Endothelial cell of umbilical vein (primary cell): ENCODE measurements at regions of chr12 and their contacts with region 1.

Region 1: DNA sequence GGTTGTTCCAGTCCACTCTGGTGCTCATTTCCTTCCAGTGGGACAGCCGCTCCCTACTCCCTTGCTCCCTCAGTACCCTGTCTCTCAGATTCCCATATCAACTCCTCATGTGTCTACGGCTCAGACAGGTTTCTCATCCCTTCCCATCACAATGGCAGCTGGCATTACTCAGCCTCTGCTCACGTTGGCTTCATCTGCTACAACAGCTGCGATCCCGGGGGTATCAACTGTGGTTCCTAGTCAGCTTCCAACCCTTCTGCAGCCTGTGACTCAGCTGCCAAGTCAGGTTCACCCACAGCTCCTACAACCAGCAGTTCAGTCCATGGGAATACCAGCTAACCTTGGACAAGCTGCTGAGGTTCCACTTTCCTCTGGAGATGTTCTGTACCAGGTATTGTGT is 69.9 kb downstream of the RAD52 start:
- DNase-seq: no peak
- H3K4me3 ChIP-seq: no peak overlapping the region
- H3K27ac ChIP-seq: no peak overlapping the region
- H3K4me1 ChIP-seq: no peaks in the 10 kb centered on the region
- H3K27me3 ChIP-seq: no peaks in the 10 kb centered on the region
- CTCF ChIP-seq: no peak
- POLR2A ChIP-seq: no peak

Region 2: DNA sequence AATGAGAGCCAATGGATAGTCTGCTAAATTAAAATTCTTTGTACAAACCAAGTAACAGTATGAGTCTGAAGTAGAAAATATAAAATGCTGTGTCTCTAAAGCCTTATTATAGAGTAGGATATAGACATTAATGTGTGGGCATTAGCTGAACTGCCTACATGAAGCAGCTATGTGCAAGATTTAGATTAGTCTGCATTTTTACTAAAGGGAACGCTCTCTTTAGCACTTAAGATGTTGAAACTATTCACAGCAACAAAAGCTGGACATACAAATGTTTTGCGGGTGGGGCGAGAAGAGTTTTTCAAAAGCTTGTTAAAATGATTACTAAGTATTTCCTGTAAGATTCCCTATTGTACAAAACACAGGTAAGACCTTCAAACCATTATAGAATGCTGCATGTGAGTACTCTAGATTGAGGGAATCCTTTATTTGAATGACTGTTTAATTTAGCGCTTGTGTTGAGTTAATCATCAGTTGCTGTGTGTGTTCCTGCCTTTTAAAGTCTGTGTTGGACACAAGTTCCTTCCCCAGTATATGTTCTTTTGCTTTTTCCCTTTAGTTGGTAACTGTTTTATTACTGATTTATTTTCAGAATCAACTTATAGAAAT is 17.2 kb before region 1 on chr12:
- CTCF ChIA-PET with region 1: interaction called, 3 read pairs
- POLR2A ChIA-PET with region 1: no interaction called
- dilution Hi-C with region 1: no loop called
- intact Hi-C with region 1: loop called (anchors 2 kb)
- DNase-seq: no peak
- H3K4me3 ChIP-seq: no peak overlapping the region
- H3K27ac ChIP-seq: no peak overlapping the region
- H3K4me1 ChIP-seq: no peaks in the 10 kb centered on the region
- H3K27me3 ChIP-seq: no peaks in the 10 kb centered on the region
- CTCF ChIP-seq: no peak
- POLR2A ChIP-seq: no peak